Dorsolateral prefrontal cortex (tissue), 120 donors: ENCODE measurements at regions of chr1 and their contacts with region 1.

Region 1: DNA sequence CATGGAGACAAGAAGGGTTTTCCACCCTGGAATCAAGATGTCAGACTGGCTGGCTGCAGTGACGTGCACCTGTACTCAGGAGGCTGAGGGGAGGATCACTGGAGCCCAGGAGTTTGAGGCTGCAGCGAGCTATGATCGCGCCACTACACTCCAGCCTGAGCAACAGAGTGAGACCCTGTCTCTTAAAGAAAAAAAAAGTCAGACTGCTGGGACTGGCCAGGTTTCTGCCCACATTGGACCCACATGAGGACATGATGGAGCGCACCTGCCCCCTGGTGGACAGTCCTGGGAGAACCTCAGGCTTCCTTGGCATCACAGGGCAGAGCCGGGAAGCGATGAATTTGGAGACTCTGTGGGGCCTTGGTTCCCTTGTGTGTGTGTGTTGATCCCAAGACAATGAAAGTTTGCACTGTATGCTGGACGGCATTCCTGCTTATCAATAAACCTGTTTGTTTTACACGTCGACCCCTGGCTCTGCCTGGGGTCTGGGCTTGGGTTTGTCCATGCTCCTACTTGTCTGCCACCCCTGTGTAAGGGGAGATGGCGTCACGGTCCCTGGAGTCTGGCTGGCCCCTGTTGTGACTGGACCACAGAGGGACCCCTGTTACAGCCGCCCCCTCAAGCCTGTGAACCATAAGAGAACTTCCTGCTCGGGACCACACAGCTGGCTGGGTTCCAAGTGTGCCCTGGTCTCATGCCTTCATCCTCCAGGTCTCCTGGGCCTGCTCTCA is 20.9 kb upstream of the VPS13D start:
- DNase-seq: peak; percentile 80 to 94 (median 86)
- H3K4me3 ChIP-seq: no peak overlapping the region
- H3K27ac ChIP-seq: peak overlapping the region in 2 of 59 donors; percentile 18 to 51
- H3K27me3 ChIP-seq: no peaks in the 10 kb centered on the region
- CTCF ChIP-seq: peak; percentile 71 to 99 (median 96)

Region 2: DNA sequence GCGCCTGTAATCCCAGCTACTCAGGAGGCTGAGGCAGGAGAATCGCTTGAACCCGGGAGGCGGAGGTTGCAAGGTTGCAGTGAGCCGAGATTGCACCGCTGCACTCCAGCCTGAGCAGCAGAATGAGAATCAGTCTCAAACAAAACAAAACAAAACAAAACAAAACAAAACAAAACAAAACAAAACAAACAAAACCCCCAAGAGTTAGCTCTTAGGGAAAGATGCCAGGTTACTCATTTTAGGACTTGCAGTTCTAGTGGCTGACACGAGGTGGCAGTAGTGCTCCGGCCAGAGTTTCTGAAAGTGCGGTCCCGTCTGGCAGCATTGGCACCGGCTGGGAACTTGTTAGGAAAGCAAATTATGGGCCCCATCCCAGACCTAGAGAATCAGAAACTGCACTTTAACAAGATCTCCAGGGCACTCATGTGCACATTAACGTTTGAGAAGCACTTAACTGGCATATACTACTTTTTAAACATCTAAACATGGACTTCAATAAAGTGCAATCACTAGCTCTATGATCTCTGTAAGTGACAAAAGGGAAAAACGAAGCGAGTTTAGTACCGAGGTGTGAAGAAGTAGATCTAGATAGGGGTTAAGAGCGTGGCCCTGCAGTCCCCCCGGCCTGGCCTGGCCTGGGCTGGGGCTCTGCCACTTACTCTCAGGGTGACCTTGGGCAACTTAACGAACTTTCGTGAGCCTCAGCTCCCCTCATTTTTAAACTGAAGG is 84.1 kb before region 1 on chr1:
- intact Hi-C with region 1: loop called (anchors 2 kb)
- DNase-seq: peak; percentile 50 to 79 (median 70)
- H3K4me3 ChIP-seq: no peak overlapping the region
- H3K27ac ChIP-seq: peak overlapping the region in 4 of 59 donors; percentile 19 to 57 (median 38)
- H3K27me3 ChIP-seq: peaks cover 0 to 5% (median 0%) of the 10 kb centered on the region in 45 donors
- CTCF ChIP-seq: peak; percentile 85 to 100 (median 97)